SK-N-SH (cell line): ENCODE measurements at regions of chr17 and their contacts with region 1.

Region 1: GRCh38 chr17:13031718-13032350 is 14.0 kb upstream of the ELAC2 start:
- DNase-seq: peak; percentile 48
- H3K4me3 ChIP-seq: no peak overlapping the region; a peak in 1 of 4 replicates
- H3K27ac ChIP-seq: no peak overlapping the region
- H3K4me1 ChIP-seq: no peaks in the 10 kb centered on the region
- H3K27me3 ChIP-seq: no peaks in the 10 kb centered on the region; the same call in 1 of the 2 replicates
- CTCF ChIP-seq: peak; percentile 82
- EP300 ChIP-seq: no peak
- RAD21 ChIP-seq: peak; percentile 42

Region 2: GRCh38 chr17:13017659-13018459 is 14.0 kb before region 1 on chr17 and contains the start of gene ELAC2:
- CTCF ChIA-PET with region 1: interaction called, 94 read pairs
- POLR2A ChIA-PET with region 1: interaction called, 6 read pairs
- DNase-seq: peak; percentile 97
- H3K4me3 ChIP-seq: peak within 1 kb of the TSS; percentile 71 to 93
- H3K27ac ChIP-seq: peak within 1 kb of the TSS; percentile 66 to 82
- H3K4me1 ChIP-seq: peaks cover 0 to 5% of the 10 kb centered on the region in 2 experiments; a peak in 2 of 4 replicates
- H3K27me3 ChIP-seq: no peaks in the 10 kb centered on the region; the same call in 1 of the 2 replicates
- CTCF ChIP-seq: no peak
- EP300 ChIP-seq: no peak; a peak in 1 of 4 replicates
- RAD21 ChIP-seq: no peak
- polyA plus RNA-seq, gene ELAC2: 77.6 and 95.8 TPM in 2 replicates

Region 3: GRCh38 chr17:13106171-13106570 is 74.3 kb after region 1 on chr17:
- CTCF ChIA-PET with region 1: interaction called, 38 read pairs
- POLR2A ChIA-PET with region 1: no interaction called
- DNase-seq: no peak
- H3K4me3 ChIP-seq: no peak overlapping the region
- H3K27ac ChIP-seq: no peak overlapping the region
- H3K4me1 ChIP-seq: no peaks in the 10 kb centered on the region
- H3K27me3 ChIP-seq: peaks cover 20% of the 10 kb centered on the region; the same call in 1 of the 2 replicates
- CTCF ChIP-seq: no peak
- EP300 ChIP-seq: no peak
- RAD21 ChIP-seq: no peak

Region 4: DNA sequence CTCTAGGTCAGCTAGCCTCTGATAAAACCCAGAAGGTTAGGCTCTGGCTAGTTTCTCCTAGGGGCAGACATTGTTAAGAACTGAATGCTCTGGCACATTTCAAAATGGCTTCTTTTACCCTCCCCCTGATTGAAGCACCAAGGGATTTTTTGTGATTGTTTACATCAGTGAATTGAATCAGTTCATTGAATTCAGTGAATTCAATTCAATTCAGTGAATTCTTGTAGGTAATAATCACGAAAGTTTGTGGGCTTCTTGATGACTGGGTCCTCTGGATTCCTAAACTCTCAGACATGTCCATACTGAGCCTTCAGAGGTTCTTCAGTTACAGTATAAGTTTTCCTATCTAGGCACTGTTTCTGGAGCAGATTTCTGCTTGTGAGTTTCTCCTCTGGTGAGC is 121.2 kb after region 1 on chr17:
- CTCF ChIA-PET with region 1: no interaction called
- POLR2A ChIA-PET with region 1: no interaction called
- DNase-seq: no peak
- H3K4me3 ChIP-seq: no peak overlapping the region
- H3K27ac ChIP-seq: no peak overlapping the region
- H3K4me1 ChIP-seq: no peaks in the 10 kb centered on the region
- H3K27me3 ChIP-seq: no peaks in the 10 kb centered on the region
- CTCF ChIP-seq: no peak
- EP300 ChIP-seq: no peak
- RAD21 ChIP-seq: no peak

Region 5: DNA sequence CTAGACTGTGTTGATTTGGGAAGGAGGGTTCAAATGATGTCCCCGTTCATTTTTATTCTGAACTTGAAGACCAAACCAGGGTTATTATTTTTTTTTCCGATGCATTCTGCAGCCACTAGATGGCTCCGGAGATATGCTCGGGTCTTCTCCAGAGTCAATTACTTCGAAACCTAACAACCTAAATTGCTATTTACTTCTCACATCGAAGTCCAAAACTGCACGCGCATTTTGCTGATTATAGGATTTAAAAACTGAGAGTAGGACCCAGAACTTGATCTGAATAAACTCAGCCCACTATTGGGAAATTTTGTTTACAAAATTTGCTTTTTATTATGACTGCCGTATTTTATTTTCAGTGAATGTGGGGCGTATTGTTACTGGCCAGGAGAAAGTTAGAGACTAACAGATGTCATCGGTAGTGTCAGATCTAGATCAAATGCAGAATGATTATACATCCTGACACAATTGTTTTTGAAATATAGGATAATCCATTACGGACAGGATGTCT is 306.1 kb after region 1 on chr17:
- CTCF ChIA-PET with region 1: interaction called, 10 read pairs
- POLR2A ChIA-PET with region 1: no interaction called
- DNase-seq: peak; percentile 51
- H3K4me3 ChIP-seq: peak overlapping the region; percentile 41 to 57
- H3K27ac ChIP-seq: peak overlapping the region; percentile 37 to 62; a peak in 3 of 4 replicates
- H3K4me1 ChIP-seq: peaks cover 0 to 3% of the 10 kb centered on the region in 2 experiments; a peak in 1 of 4 replicates
- H3K27me3 ChIP-seq: no peaks in the 10 kb centered on the region
- CTCF ChIP-seq: peak; percentile 93
- EP300 ChIP-seq: peak in 1 of 2 experiments; percentile 82; a peak in 2 of 4 replicates
- RAD21 ChIP-seq: peak; percentile 96